H1 (cell line): ENCODE measurements at regions of chr17 and their contacts with region 1.

Region 1: GRCh38 chr17:1506649-1507267 is 9.7 kb downstream of the INPP5K start:
- DNase-seq: no peak
- H3K4me3 ChIP-seq: no peak overlapping the region
- H3K27ac ChIP-seq: no peak overlapping the region
- H3K4me1 ChIP-seq: no peaks in the 10 kb centered on the region
- H3K27me3 ChIP-seq: no peaks in the 10 kb centered on the region
- CTCF ChIP-seq: no peak
- EP300 ChIP-seq: no peak
- POLR2A ChIP-seq: no peak
- RAD21 ChIP-seq: no peak

Region 2: DNA sequence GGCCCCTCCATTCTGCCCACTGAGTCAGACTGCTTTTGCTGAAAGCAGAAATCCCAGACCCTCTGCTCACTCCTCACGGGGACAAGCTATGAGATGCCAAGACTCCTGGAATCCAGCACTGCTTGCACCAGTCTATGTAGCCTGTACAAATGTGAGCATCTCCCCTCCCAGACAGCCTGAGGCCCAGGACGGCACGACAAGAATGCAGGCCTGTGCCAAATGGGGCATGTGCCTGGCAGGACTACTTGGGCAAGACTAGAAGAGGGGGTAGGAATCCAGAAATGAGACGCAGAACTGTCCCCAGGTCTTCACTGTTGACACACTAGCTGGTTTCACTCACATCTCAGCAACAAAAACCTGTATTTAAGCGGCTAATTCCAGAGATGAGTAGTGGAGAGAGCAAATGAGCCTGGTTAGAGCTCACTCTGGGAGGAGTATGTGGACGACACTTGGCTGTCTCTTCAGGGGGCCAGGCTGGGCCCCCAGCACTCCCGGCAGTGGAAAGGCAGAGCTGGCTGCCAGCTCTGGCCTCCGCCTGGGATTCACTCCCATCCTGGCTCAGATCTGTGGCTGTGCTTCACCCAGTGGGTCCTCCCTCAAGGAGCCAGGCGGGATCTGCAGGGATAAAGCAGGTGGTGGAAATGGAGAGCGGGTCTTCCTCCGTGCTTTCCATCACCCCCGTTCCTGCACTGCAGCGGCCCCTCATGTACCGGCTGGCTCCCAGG is 11.3 kb before region 1 on chr17:
- CTCF ChIA-PET with region 1: interaction called, 26 read pairs
- POLR2A ChIA-PET with region 1: interaction called, 15 read pairs
- DNase-seq: no peak
- H3K4me3 ChIP-seq: no peak overlapping the region
- H3K27ac ChIP-seq: no peak overlapping the region
- H3K4me1 ChIP-seq: peaks cover 0 to 9% (median 4%) of the 10 kb centered on the region in 4 experiments; a peak in 4 of 7 replicates
- H3K27me3 ChIP-seq: no peaks in the 10 kb centered on the region
- CTCF ChIP-seq: no peak
- EP300 ChIP-seq: no peak
- POLR2A ChIP-seq: no peak
- RAD21 ChIP-seq: no peak